IMR-90 (cell line): ENCODE measurements at regions of chr16 and their contacts with region 1.

Region 1: DNA sequence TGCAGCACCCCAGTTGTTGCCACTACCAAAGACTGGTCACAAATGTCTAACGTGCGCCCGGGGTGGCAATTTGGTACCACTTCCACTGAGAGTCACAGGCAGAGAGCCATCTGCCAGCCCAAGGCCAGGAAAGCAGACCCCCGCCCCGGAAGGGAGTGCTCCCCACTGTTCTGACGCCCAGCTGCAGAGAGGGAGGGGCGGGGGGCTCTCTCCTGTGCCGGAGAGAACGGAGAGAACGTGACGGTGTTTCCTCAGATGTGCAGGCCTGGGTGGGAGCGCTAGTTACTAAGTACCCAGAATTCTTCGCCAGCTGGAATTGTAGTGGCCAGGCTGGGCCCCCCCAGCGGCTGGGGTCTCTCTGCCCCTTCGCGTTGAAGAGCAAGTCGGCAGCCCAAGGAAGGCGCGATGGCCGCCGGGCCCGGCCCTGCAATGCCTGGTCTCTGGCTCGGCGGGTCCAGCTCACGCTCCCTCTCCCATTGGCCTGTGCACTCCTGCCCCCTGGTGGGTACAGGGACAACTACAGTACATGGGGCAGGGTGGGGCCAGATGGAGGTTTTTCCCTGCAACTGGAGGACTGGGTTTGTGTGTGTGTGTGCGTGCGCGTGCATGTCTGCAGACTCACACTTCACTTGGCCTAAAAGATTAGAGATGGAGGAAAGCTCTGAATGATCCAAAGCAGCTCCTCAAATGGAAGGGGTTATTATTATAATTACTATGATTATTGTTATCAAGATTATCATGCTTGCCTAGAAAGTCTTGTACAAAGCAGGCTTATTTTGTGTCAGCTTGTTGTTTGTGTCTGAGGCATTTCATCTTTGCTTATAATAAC is 107.1 kb downstream of the AMFR start:
- DNase-seq: peak; percentile 70
- ATAC-seq: peak; percentile 100
- H3K4me3 ChIP-seq: no peak overlapping the region
- H3K27ac ChIP-seq: no peak overlapping the region
- H3K4me1 ChIP-seq: no peaks in the 10 kb centered on the region
- H3K27me3 ChIP-seq: peaks cover 28% of the 10 kb centered on the region
- CTCF ChIP-seq: peak; percentile 97
- POLR2A ChIP-seq: peak; percentile 55; the same call in 1 of the 2 replicates
- RAD21 ChIP-seq: peak; percentile 100

Region 2: GRCh38 chr16:55711959-55712876 is 606.0 kb before region 1 on chr16:
- CTCF ChIA-PET with region 1: no interaction called
- POLR2A ChIA-PET with region 1: no interaction called
- dilution Hi-C with region 1: no loop called
- in situ Hi-C with region 1: loop called (anchors 25 kb)
- intact Hi-C with region 1: loop called (anchors 1 kb)
- DNase-seq: peak; percentile 45
- ATAC-seq: peak; percentile 76
- H3K4me3 ChIP-seq: no peak overlapping the region
- H3K27ac ChIP-seq: no peak overlapping the region
- H3K4me1 ChIP-seq: no peaks in the 10 kb centered on the region
- H3K27me3 ChIP-seq: peaks cover 3% of the 10 kb centered on the region
- CTCF ChIP-seq: peak; percentile 58
- POLR2A ChIP-seq: no peak
- RAD21 ChIP-seq: peak; percentile 54

Region 3: DNA sequence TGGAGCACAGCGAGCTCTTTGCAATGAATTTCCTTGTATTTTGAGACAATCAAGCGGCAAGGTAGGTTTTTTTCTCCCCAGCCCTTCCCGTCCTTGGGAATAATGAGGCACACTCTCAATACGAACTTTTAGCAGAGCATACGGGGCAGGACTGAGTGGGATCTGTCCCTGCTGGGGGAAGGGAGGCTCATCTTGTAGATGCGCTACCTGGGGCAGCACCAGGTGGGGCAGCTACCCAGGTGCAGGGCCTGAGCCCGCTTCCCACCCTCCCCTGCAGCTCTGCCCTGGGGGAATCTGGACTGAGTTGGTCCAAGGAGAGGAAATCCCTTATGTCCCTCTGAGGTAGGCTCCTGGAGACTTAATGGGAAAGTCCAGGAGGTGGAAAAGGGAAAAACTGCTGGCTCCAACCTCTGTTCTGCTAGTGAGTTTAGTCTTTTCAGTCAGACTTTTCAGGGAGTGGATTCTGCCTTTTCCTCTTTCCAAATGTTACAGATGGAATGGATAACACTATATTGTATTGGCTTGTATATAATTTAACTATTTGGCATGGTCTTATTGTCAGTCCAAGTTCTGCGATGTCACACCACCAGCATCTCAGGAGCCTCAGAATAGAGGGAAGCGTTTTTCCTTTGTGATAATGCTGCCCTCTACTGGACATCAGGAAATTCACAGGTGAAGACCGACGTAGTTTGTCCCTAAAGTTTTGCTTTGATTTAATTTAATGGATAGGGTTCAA is 475.7 kb before region 1 on chr16:
- CTCF ChIA-PET with region 1: no interaction called
- POLR2A ChIA-PET with region 1: no interaction called
- dilution Hi-C with region 1: no loop called
- in situ Hi-C with region 1: no loop called
- intact Hi-C with region 1: loop called (anchors 2 kb)
- DNase-seq: peak; percentile 45
- ATAC-seq: peak; percentile 80; the same call in 1 of the 2 replicates
- H3K4me3 ChIP-seq: no peak overlapping the region
- H3K27ac ChIP-seq: no peak overlapping the region
- H3K4me1 ChIP-seq: no peaks in the 10 kb centered on the region
- H3K27me3 ChIP-seq: no peaks in the 10 kb centered on the region
- CTCF ChIP-seq: peak; percentile 71
- POLR2A ChIP-seq: no peak
- RAD21 ChIP-seq: peak; percentile 73

Region 4: DNA sequence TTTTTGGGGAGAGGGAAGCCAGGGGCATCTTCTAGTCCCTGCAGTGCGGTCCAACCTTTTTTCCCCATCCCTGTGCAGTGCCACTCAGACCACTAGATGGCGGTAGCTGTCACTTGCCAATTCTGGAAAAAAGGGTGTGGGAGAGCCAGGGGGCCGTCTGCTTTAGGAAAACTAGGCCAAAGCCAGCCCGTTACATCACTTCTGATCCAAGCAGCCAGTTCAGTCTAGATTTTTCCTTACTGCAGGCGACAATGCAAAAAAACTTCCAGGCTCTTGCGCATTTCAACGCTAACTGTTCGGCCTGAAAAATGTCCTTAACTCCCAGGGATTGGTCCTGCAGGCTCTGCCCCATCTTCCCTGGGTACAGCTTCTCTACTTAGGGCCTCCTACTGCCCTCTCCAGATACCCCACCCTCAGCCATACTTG is 373.8 kb before region 1 on chr16:
- CTCF ChIA-PET with region 1: interaction called, 19 read pairs
- POLR2A ChIA-PET with region 1: no interaction called
- dilution Hi-C with region 1: no loop called
- in situ Hi-C with region 1: loop called (anchors 5 kb)
- intact Hi-C with region 1: loop called (anchors 1 kb)
- DNase-seq: peak; percentile 55
- ATAC-seq: peak; percentile 98
- H3K4me3 ChIP-seq: no peak overlapping the region
- H3K27ac ChIP-seq: no peak overlapping the region
- H3K4me1 ChIP-seq: no peaks in the 10 kb centered on the region
- H3K27me3 ChIP-seq: no peaks in the 10 kb centered on the region
- CTCF ChIP-seq: peak; percentile 88
- POLR2A ChIP-seq: no peak
- RAD21 ChIP-seq: peak; percentile 80

Region 5: DNA sequence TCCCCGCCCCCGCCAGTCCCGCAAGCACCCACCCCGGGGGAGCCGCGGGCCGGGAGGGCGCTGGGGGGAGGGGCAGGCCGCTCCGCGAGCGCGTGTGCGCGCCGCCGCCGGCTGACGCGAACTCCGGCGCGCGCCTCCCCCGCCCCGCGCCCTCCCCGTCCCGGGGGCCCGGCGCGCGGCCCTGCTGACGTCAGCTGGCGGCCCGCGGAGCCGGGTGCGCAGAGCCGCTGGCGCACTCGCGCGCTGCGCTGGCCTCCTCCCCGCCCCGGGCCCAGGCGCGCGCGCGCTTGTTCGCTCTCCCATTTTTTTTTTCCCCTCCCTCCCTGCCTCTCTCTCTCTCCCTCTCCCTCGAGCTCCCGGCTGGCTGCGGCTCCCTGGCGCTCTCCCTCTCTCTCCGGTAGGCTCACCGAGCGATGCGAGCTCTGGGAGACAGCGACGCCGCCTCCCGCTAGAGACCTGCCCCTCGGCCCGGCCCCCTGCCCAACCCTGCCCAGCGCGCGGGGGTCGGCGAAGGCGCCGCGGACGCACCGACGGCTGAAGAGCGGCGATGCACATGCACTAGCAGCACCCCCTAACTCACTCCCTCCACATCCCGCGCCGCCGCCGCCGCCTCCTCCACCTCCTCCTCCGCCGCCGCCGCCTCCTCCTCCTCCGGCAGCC is 126.9 kb before region 1 on chr16 and contains the start of gene GNAO1:
- CTCF ChIA-PET with region 1: no interaction called
- POLR2A ChIA-PET with region 1: no interaction called
- dilution Hi-C with region 1: no loop called
- in situ Hi-C with region 1: no loop called
- intact Hi-C with region 1: loop called (anchors 2 kb)
- DNase-seq: peak; percentile 51
- ATAC-seq: peak; percentile 90
- H3K4me3 ChIP-seq: peak within 1 kb of the TSS; percentile 55
- H3K27ac ChIP-seq: no peak within 1 kb of the TSS
- H3K4me1 ChIP-seq: no peaks in the 10 kb centered on the region; the same call in 1 of the 2 replicates
- H3K27me3 ChIP-seq: peaks cover 55% of the 10 kb centered on the region
- CTCF ChIP-seq: no peak
- POLR2A ChIP-seq: no peak
- RAD21 ChIP-seq: no peak
- total RNA-seq, gene GNAO1: under 0.01 TPM in 1 of 2 replicates, not detected in the other